ENCODE measurements at regions of chr18 and their contacts with region 1.

Region 1: GRCh38 chr18:3012964-3013804 is at the start of gene LPIN2:
- DNase-seq: peak; percentile 99
- H3K4me3 Mint-ChIP-seq: peak within 1 kb of the TSS; percentile 93
- H3K27ac Mint-ChIP-seq: peak within 1 kb of the TSS; percentile 96
- H3K4me1 Mint-ChIP-seq: peaks cover 56% of the 10 kb centered on the region
- H3K27me3 Mint-ChIP-seq: no peaks in the 10 kb centered on the region
- total RNA-seq, gene LPIN2: 111 and 118 TPM in 2 replicates

Region 2: GRCh38 chr18:2971741-2972552 is 41.2 kb before region 1 on chr18:
- intact Hi-C with region 1: loop called (anchors 5 kb)
- DNase-seq: peak; percentile 92
- H3K4me3 Mint-ChIP-seq: peak overlapping the region; percentile 83
- H3K27ac Mint-ChIP-seq: peak overlapping the region; percentile 92
- H3K4me1 Mint-ChIP-seq: peaks cover 80% of the 10 kb centered on the region
- H3K27me3 Mint-ChIP-seq: no peaks in the 10 kb centered on the region

Region 3: DNA sequence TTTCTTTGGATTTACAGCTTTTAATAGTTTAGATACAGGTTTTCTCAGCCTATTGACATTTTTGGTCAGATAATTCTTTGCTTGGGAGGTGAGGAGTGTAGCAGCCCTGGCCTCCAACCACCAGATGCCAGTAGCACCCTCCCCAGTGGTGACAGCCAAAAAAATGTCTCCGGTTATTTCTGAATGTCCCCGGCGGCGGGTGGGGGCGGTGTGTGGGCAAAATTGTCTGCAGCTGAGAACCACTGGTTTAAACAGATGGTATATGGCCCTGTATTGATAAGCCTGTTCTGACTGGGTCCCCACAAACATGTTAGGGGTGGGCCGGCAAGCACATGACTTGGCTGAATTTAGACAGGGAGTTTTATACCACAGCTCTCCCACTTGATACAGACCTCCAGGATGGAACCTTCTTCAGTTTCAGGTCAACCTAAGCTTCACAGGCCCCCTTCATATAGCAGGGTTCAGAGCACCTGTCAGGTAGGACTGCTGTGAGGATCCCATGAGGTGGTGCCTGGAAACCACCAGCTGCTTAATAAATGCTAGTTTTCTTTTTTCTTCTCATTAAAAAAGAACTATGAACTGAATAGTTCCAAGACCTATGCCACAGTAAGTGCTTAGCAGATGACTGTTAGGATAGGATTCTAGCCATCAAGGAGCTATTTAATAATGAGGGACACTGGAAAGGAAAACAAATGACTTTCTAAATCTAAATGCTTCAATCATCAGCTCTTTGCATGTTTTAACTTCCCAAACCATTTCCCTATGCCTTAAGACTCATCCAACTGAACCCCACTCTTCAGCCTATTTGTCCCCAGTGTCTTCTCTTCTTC is 18.4 kb before region 1 on chr18:
- intact Hi-C with region 1: loop called (anchors 1 kb)
- DNase-seq: peak; percentile 92
- H3K4me3 Mint-ChIP-seq: peak overlapping the region; percentile 75
- H3K27ac Mint-ChIP-seq: peak overlapping the region; percentile 93
- H3K4me1 Mint-ChIP-seq: peaks cover 76% of the 10 kb centered on the region
- H3K27me3 Mint-ChIP-seq: no peaks in the 10 kb centered on the region

Region 4: DNA sequence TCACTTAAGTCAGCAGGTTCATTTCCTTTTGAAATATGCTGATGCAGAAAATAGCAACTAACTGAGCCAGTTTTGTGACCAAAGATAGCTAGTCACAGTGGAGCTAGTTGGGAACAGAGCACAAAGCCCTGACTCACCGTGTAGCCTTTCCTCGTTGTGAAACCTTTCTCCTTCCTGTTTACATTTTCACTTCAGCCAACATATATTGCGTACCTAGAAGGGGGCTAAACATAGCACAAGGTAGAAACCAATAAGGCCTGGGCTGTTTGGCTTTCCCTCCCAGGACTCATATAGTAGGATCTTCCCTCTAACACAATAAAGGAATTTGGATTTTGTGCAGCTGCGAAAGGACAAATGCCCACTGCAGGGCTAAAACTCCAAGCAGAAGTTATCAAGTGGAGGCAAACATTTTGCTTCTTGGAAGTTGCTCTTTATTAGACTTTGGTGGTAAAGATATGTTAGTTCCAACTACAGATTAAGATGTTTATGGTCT is 24.3 kb after region 1 on chr18:
- intact Hi-C with region 1: loop called (anchors 1 kb)
- DNase-seq: peak; percentile 82
- H3K4me3 Mint-ChIP-seq: peak overlapping the region; percentile 49
- H3K27ac Mint-ChIP-seq: peak overlapping the region; percentile 82
- H3K4me1 Mint-ChIP-seq: peaks cover 25% of the 10 kb centered on the region
- H3K27me3 Mint-ChIP-seq: no peaks in the 10 kb centered on the region

Region 5: DNA sequence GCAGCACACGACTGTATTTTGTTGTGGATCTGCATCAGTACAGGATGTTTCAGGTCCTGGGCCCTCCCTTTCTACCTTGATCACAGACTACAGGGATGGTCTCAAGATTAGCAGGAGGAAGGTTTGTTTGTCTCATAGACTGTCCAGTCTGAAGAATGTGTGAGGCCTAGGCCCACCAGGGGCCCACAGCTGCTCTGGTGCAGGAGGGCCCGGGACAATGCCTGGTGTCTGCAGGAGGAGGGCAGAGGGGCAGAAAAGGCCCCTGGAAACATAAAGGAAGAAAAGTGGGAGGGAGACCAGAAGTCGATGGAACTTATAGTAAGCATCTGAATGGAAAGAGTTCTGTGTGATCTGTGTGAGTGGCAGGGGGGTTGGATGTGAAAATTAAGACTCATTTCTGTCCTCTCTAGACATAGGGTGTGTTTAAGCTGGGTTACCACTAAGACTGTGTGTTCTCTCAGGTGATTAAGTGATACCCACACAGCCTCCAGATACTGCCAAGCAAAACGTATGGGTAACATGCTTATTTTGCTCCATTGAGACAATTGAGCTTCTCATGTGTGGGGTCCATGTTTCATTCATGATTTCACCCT is 33.1 kb after region 1 on chr18:
- intact Hi-C with region 1: loop called (anchors 2 kb)
- DNase-seq: peak; percentile 56
- H3K4me3 Mint-ChIP-seq: no peak overlapping the region
- H3K27ac Mint-ChIP-seq: peak overlapping the region; percentile 87
- H3K4me1 Mint-ChIP-seq: peaks cover 27% of the 10 kb centered on the region
- H3K27me3 Mint-ChIP-seq: no peaks in the 10 kb centered on the region

Region 6: GRCh38 chr18:3129053-3129864 is 116.1 kb after region 1 on chr18:
- intact Hi-C with region 1: loop called (anchors 5 kb)
- DNase-seq: peak; percentile 94
- H3K4me3 Mint-ChIP-seq: peak overlapping the region; percentile 10
- H3K27ac Mint-ChIP-seq: no peak overlapping the region
- H3K4me1 Mint-ChIP-seq: peaks cover 9% of the 10 kb centered on the region
- H3K27me3 Mint-ChIP-seq: no peaks in the 10 kb centered on the region

Region 7: DNA sequence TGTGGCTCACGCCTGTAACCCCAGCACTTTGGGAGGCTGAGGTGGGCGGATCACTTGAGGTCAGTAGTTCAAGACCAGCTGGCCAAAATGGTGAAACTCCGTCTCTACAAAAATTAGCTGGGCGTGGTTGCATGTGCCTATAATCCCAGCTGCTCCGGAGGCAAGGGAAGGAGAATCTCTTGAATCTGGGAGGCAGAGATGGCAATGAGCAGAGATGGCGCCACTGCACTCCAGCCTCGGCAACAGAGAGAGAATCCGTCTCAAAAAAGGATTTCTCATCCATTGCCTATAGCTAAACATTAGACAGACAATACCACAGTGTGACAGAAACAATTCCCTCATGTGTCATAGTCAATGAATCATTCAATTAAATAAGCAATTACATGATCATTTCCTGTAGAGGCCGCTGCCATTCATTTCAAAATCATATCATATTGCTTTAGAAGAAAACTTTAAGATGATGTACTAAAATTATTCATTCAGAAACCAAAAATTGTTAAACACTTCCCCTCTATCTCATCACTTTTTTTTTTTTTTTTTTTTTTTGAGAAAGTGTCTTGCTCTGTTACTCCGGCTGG is 367.3 kb after region 1 on chr18:
- intact Hi-C with region 1: no loop called
- DNase-seq: no peak
- H3K4me3 Mint-ChIP-seq: no peak overlapping the region
- H3K27ac Mint-ChIP-seq: no peak overlapping the region
- H3K4me1 Mint-ChIP-seq: peaks cover 2% of the 10 kb centered on the region
- H3K27me3 Mint-ChIP-seq: peaks cover 6% of the 10 kb centered on the region